ENCODE measurements at regions of chr19 and their contacts with region 1.

Region 1: DNA sequence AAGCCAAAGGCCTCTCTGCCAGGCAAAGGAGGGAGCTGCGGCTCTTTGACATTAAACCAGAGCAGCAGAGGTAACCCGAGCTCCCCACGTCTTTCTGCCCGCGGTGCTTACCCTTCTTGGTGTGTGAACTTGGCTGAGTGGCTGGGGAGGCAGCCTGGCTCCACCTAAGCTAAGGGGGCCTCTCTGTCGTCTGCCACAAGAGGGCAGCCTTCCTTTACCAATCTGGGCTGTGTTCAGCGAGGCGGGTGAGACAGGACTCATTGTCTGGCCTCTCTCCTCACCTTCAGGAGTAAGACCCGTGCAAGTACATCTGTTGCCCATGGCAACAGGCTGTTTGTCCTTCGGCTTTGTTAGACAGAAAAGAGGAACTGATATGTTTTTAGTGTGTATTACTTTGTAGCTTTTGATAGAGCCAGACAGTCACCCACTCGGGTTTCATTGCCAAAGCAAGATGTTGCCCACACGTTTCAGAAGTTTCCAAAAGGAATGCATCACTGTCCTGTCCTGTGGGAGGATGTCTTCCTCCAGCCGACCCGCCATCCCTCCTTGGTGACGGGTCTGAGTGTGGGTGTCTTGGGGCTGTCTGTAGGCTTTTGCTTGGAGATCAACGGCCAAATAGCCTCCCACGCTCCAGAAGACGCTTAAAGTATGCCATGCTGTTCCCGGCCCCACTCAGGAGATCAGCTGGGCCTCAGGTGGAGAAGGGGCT is 4.6 kb downstream of the POP4 start:
- DNase-seq: peak; percentile 84 to 86
- H3K4me3 ChIP-seq: no peak overlapping the region
- H3K27ac ChIP-seq: no peak overlapping the region
- H3K4me1 ChIP-seq: peaks cover 0 to 9% (median 6%) of the 10 kb centered on the region in 4 donors
- H3K27me3 ChIP-seq: no peaks in the 10 kb centered on the region
- CTCF ChIP-seq: peak; percentile 83 to 88

Region 2: GRCh38 chr19:29694669-29695627 is 84.2 kb after region 1 on chr19:
- intact Hi-C with region 1: loop called (anchors 5 kb)
- DNase-seq: peak; percentile 89 to 90
- H3K4me3 ChIP-seq: no peak overlapping the region
- H3K27ac ChIP-seq: peak overlapping the region in 1 of 2 donors; percentile 28
- H3K4me1 ChIP-seq: no peaks in the 10 kb centered on the region
- H3K27me3 ChIP-seq: no peaks in the 10 kb centered on the region
- CTCF ChIP-seq: peak; percentile 84 to 95

Region 3: DNA sequence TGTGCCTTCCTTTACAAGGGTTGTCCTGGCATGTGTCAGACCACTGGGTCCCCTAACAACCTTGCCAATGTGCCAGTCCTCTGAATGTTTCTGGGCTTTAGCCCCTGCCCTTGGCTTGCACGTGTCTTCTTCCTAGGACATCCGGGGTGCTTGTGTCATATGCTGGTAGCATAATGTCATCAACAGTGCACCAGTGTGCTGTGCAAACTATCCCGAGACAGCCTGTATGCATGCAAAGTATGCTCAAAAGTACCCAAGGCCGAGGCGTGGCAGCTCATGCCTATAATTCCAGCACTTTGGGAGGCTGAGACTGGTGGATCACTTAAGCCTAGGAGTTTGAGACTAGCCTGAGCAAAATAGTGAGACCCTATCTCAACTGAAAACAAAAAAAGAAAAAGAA is 125.1 kb after region 1 on chr19:
- intact Hi-C with region 1: no loop called
- DNase-seq: no peak
- H3K4me3 ChIP-seq: no peak overlapping the region
- H3K27ac ChIP-seq: no peak overlapping the region
- H3K4me1 ChIP-seq: no peaks in the 10 kb centered on the region
- H3K27me3 ChIP-seq: peaks cover 0 to 41% of the 10 kb centered on the region in 2 donors
- CTCF ChIP-seq: no peak

Measured in tibial artery (tissue), 4 donors.